ENCODE measurements at regions of chr3 and their contacts with region 1.

Region 1: DNA sequence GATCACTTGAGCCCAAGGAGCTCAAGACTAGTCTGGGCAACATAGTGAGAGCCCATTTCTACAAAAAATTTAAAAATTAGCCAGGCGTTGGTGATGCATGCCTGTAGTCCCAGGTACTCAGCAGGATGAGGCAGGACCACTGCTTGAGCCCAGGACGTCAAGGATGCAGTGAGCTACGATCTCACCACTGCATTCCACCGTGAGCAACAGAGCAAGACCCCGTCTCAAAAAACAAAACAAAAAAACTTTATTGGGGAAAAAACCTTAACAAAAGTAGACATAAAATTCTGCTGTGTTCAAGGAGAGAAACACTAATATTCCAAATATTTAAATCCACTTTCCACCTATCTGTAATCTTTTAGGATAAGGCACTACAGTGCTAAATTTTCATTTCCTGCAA is 20.8 kb downstream of the SETD2 start:
- DNase-seq: no peak
- ATAC-seq: no peak
- H3K4me3 ChIP-seq: no peak overlapping the region
- H3K27ac ChIP-seq: no peak overlapping the region
- H3K4me1 ChIP-seq: peaks cover 53% of the 10 kb centered on the region
- H3K27me3 ChIP-seq: no peaks in the 10 kb centered on the region
- CTCF ChIP-seq: no peak
- EP300 ChIP-seq: no peak
- POLR2A ChIP-seq: no peak
- RAD21 ChIP-seq: no peak

Region 2: GRCh38 chr3:47102081-47102600 is 40.9 kb before region 1 on chr3:
- CTCF ChIA-PET with region 1: no interaction called
- POLR2A ChIA-PET with region 1: no interaction called
- in situ Hi-C with region 1: no loop called
- intact Hi-C with region 1: loop called (anchors 2 kb)
- DNase-seq: peak; percentile 12
- ATAC-seq: peak; percentile 61
- H3K4me3 ChIP-seq: no peak overlapping the region
- H3K27ac ChIP-seq: peak overlapping the region; percentile 61
- H3K4me1 ChIP-seq: peaks cover 48% of the 10 kb centered on the region
- H3K27me3 ChIP-seq: no peaks in the 10 kb centered on the region
- CTCF ChIP-seq: no peak
- EP300 ChIP-seq: no peak
- POLR2A ChIP-seq: no peak
- RAD21 ChIP-seq: no peak

Measured in HepG2 (cell line).